HepG2 (cell line): ENCODE measurements at regions of chr16 and their contacts with region 1.

Region 1: GRCh38 chr16:85151603-85152413 is 39.5 kb upstream of the CIBAR2 start:
- DNase-seq: no peak
- ATAC-seq: peak; percentile 70
- H3K4me3 ChIP-seq: peak overlapping the region in 1 of 3 experiments; percentile 56; a peak in 2 of 6 replicates
- H3K27ac ChIP-seq: no peak overlapping the region
- H3K4me1 ChIP-seq: peaks cover 68% of the 10 kb centered on the region
- H3K27me3 ChIP-seq: peaks cover 4 to 23% of the 10 kb centered on the region in 2 experiments
- CTCF ChIP-seq: peak; percentile 38
- EP300 ChIP-seq: no peak
- POLR2A ChIP-seq: no peak
- RAD21 ChIP-seq: no peak

Region 2: DNA sequence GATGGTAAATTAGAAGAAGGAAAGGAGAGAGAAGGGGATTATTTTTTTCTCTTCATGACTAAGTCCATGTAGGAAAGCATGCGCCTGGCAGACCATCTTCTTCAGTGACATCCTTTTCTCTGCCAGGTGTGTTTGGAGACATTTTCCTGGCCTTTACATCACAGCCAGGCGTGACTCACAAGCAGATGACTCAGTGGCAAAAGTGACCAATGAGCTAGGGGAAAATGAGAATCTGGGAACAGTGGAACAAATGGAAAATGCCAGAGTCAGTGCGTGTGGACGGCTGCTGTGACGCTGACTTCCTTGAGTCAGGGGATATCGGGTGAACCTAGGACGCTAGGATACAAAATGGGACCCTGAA is 114.8 kb before region 1 on chr16:
- CTCF ChIA-PET with region 1: no interaction called
- POLR2A ChIA-PET with region 1: no interaction called
- in situ Hi-C with region 1: no loop called
- intact Hi-C with region 1: no loop called
- DNase-seq: no peak
- ATAC-seq: no peak
- H3K4me3 ChIP-seq: no peak overlapping the region
- H3K27ac ChIP-seq: no peak overlapping the region
- H3K4me1 ChIP-seq: peaks cover 7% of the 10 kb centered on the region; the same call in 1 of the 2 replicates
- H3K27me3 ChIP-seq: peaks cover 0 to 24% of the 10 kb centered on the region in 2 experiments; a peak in 3 of 5 replicates
- CTCF ChIP-seq: no peak
- EP300 ChIP-seq: no peak
- POLR2A ChIP-seq: no peak
- RAD21 ChIP-seq: no peak

Region 3: DNA sequence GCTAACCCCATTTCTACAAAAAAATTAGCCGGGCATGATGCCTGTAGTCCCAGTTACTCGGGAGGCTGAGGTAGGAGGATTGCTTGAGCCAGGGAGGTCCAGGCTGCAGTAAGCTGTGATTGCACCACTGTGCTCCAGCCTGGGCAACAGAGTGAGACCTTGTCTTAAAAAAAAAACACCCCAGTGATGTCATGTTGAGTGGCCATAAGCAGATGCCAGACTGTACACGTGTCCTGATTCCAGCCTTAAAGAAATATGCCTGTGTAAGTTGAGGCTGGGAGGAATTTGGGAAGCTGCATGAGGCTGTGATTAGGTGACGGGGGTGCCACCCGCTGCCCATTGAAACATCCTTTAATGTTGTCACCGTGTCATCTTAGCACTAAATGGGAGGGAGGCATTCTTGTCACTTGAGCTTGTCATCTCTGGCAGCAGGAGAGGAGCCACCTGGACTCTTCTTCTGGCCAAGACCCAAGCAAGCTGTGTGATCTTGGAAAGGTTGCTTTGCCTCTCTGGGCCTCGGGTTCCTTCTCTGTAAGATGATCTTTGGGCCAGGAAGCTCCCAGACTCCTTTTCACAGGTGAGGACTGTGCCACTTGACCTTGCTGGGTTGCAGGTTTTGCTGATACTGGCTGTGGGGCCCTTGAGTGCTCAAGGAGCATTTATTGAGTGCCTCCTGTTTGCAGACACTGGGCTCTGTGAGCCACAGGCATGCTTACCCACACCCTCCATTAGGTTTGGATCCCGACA is 58.8 kb after region 1 on chr16:
- CTCF ChIA-PET with region 1: no interaction called
- POLR2A ChIA-PET with region 1: no interaction called
- in situ Hi-C with region 1: loop called (anchors 10 kb)
- intact Hi-C with region 1: no loop called
- DNase-seq: no peak
- ATAC-seq: no peak
- H3K4me3 ChIP-seq: no peak overlapping the region
- H3K27ac ChIP-seq: no peak overlapping the region
- H3K4me1 ChIP-seq: peaks cover 85% of the 10 kb centered on the region
- H3K27me3 ChIP-seq: peaks cover 0 to 4% of the 10 kb centered on the region in 2 experiments; a peak in 1 of 5 replicates
- CTCF ChIP-seq: no peak
- EP300 ChIP-seq: no peak
- POLR2A ChIP-seq: no peak
- RAD21 ChIP-seq: no peak

Region 4: GRCh38 chr16:85369741-85370528 is 218.1 kb after region 1 on chr16:
- CTCF ChIA-PET with region 1: no interaction called
- POLR2A ChIA-PET with region 1: no interaction called
- in situ Hi-C with region 1: no loop called
- intact Hi-C with region 1: no loop called
- DNase-seq: peak; percentile 31
- ATAC-seq: peak; percentile 86
- H3K4me3 ChIP-seq: no peak overlapping the region
- H3K27ac ChIP-seq: no peak overlapping the region
- H3K4me1 ChIP-seq: peaks cover 6% of the 10 kb centered on the region
- H3K27me3 ChIP-seq: peaks cover 0 to under 1% of the 10 kb centered on the region in 2 experiments; a peak in 2 of 5 replicates
- CTCF ChIP-seq: peak; percentile 91
- EP300 ChIP-seq: no peak
- POLR2A ChIP-seq: no peak
- RAD21 ChIP-seq: peak; percentile 84